RWPE1 (cell line): ENCODE measurements at regions of chr1 and their contacts with region 1.

Region 1: GRCh38 chr1:155017041-155017945 is 14.7 kb downstream of the ZBTB7B start:
- DNase-seq: peak; percentile 93
- H3K27ac ChIP-seq: peak overlapping the region; percentile 100
- CTCF ChIP-seq: peak; percentile 99

Region 2: GRCh38 chr1:154973344-154974062 is 43.8 kb before region 1 on chr1:
- CTCF ChIA-PET with region 1: interaction called, 11 read pairs
- POLR2A ChIA-PET with region 1: no interaction called
- DNase-seq: peak; percentile 84
- H3K27ac ChIP-seq: peak overlapping the region; percentile 100
- CTCF ChIP-seq: no peak

Region 3: DNA sequence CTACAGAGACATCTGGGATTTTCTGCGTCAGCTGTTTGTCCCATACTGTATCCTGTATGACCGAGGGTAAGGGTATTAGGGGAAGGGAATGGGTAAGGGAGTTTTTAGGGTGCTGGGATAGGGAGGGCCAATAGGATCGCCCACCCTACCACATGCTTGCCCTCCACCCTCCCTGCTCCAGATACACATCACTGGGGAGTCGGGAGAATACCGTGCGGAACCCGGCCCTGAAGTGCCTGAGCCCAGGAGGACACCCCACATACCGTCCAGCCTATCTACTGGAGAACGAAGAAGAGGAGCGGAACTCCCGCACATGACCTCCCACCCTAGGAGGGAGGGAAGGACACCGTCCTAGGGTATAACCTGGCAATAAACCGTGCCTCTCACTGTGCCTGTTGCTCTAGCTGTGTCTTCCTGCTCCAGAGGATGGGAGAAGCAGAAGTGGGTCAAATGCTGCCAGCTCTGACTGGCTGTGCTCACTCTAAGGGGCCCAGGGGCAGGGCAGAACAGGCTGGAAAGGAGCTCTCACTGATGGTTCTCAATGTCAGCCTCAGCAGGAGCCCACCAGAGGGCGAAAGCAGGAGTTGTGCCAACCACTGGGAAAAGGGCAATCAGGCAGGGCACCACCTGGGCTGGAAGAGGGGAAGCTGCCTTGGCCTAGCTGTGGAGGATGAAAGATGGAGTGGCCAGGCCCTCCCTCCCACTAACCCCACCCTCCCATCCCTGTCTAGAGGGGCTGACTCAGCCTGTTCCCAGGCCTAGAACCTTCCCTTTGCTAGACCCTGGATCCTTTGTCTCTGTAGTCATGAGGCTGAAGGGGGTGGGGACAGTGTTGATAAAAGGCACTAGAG is 24.3 kb before region 1 on chr1:
- CTCF ChIA-PET with region 1: interaction called, 22 read pairs
- POLR2A ChIA-PET with region 1: no interaction called
- DNase-seq: no peak
- H3K27ac ChIP-seq: peak overlapping the region; percentile 71
- CTCF ChIP-seq: no peak

Region 4: GRCh38 chr1:155001675-155002463 is 15.4 kb before region 1 on chr1:
- CTCF ChIA-PET with region 1: interaction called, 26 read pairs
- POLR2A ChIA-PET with region 1: no interaction called
- DNase-seq: peak; percentile 99
- H3K27ac ChIP-seq: peak overlapping the region; percentile 100
- CTCF ChIP-seq: peak; percentile 69

Region 5: DNA sequence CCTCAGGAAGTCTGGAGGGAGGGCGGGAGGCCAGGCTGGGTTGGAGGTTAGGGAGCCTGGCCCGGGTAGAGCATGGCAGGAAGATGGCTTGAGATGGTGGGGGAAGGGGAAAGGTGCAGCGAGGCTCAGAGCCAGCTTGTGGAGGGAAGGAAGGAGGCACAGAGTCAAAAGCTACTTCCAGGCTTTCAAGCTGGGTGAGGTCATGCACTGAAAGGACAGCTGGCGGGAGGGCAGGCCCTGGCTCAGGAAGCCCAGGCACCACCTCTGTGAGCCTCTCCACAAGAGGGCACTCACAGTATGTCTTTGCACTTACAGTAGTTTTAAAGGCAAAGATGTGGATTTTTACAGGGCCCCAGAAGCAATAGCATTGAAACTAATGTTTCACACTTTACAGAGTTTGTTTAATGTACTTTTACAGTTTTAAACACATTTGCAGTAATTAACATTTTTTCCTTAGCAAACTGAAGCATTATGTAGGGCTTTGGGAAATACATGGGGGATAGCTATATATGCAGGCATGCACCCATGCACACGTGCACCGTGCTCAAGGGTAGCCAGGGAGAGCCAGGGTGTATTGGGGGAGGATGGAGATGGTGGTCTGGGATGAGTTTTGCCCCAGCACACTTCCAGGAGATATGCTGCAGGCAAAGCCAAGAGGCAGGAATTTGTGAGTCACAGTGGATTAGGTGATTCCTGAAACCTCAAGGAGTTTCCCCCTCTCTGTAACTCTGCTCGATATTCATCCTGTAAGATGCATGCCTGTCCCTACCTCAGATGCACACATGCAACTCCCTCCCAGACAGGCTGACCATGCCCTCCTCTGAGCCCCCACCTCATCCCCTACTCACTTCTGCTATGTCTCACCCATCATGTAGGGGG is 27.8 kb after region 1 on chr1:
- CTCF ChIA-PET with region 1: interaction called, 10 read pairs
- POLR2A ChIA-PET with region 1: interaction called, 3 read pairs
- DNase-seq: peak; percentile 66
- H3K27ac ChIP-seq: peak overlapping the region; percentile 77
- CTCF ChIP-seq: peak; percentile 74

Region 6: DNA sequence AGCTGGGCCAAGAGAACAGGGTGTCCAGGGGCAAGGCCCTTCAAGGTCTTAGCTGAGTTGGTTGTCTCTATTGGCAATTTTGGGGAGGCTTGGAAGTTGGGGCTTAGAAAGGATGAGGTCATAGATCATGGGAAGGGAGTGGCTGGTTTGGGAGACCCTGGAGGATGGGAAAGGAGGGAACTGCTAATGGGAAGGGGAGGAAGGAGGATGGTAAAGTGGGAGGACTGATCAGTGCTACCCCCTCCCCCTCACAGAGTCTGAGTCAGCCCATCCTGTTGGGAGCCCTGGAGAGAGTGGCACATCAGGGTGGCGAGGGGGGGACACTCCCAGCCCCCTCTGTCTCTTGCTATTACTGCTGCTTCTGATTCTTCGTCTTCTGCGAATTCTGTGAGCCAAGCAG is 51.3 kb after region 1 on chr1:
- CTCF ChIA-PET with region 1: no interaction called
- POLR2A ChIA-PET with region 1: no interaction called
- DNase-seq: no peak
- H3K27ac ChIP-seq: peak overlapping the region; percentile 85
- CTCF ChIP-seq: no peak

Region 7: GRCh38 chr1:155078469-155079209 is 61.3 kb after region 1 on chr1 and contains the start of gene EFNA3:
- CTCF ChIA-PET with region 1: no interaction called
- POLR2A ChIA-PET with region 1: no interaction called
- DNase-seq: peak; percentile 84
- H3K27ac ChIP-seq: peak within 1 kb of the TSS; percentile 36
- CTCF ChIP-seq: no peak